Activated naive CD4-positive, alpha-beta T cell treated with anti-CD3 and anti-CD28 coated beads for 36 hours (primary cell): ENCODE measurements at regions of chr11 and their contacts with region 1.

Region 1: DNA sequence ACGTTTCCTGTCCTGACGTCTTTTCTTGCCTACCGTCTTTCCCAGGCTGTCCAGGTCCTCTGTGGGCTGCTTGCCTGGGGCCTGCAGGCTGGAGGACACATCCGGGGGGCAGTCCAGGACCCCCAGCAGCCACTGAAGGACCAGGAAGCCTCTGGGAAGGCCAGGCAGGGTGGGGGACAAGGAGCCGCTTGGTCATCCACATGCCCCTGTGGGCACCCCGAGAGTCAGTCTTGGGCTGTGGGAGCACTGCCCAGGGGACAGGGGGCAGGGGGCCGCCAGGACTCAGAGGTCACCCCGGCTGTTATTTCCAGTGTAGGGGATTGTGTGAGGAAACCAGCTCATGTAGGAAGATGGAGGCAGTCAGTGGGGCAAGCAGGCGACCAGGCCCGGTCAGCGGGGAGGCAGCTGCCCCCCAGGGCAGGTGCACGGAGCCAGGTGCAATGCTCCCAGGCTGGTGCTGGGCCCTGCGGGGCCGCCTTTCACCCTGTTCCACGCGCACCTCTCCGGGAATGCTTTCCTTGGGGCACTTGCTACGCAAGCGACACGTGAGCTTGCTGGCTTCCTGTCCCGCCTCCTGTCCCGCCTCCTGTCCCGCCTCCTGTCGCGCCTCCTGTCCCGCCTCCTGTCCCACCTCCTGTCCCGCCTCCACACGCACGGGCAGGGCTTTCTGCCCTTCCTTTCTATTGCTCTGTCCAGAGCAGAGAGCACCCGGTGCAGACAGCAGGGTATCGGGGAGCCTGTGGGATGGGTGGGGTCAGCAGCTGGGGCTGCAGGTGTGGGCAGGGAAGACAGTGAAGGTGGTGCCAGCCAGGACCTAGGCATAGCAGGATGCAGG is 39.5 kb downstream of the MUC5B start:
- DNase-seq: peak; percentile 94
- H3K4me3 Mint-ChIP-seq: peak overlapping the region; percentile 85
- H3K27ac Mint-ChIP-seq: peak overlapping the region; percentile 87
- H3K4me1 Mint-ChIP-seq: peaks cover 16% of the 10 kb centered on the region
- H3K27me3 Mint-ChIP-seq: no peaks in the 10 kb centered on the region

Region 2: DNA sequence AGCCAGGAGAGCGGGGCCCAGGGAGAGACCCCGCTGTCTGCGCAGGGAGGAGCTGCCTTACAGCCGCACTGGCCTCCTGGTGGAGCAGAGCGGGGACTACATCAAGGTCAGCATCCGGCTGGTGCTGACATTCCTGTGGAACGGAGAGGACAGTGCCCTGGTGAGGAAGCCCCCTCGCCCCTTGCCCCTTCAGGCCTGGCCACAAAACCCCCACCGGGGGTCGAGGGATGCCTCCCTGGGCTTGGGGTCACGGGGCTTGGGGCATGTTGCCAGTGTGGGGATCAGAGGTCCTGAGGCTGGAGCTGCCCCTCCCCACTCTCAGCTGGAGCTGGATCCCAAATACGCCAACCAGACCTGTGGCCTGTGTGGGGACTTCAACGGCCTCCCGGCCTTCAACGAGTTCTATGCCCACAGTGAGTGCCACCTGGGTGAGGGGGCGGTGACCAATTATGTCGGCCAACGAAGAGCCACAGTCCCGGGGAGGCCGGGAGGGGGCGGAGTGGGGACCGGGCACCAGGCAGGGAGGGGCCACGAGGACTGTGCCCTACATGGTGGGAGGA is 35.3 kb before region 1 on chr11:
- CTCF ChIA-PET with region 1: no interaction called
- intact Hi-C with region 1: no loop called
- DNase-seq: no peak
- H3K4me3 Mint-ChIP-seq: no peak overlapping the region
- H3K27ac Mint-ChIP-seq: no peak overlapping the region
- H3K4me1 Mint-ChIP-seq: no peaks in the 10 kb centered on the region
- H3K27me3 Mint-ChIP-seq: no peaks in the 10 kb centered on the region

Region 3: GRCh38 chr11:1309498-1310317 is 47.3 kb after region 1 on chr11 and contains the start of gene TOLLIP:
- CTCF ChIA-PET with region 1: no interaction called
- intact Hi-C with region 1: loop called (anchors 1 kb)
- DNase-seq: peak; percentile 97
- H3K4me3 Mint-ChIP-seq: peak within 1 kb of the TSS; percentile 89
- H3K27ac Mint-ChIP-seq: peak within 1 kb of the TSS; percentile 94
- H3K4me1 Mint-ChIP-seq: peaks cover 40% of the 10 kb centered on the region
- H3K27me3 Mint-ChIP-seq: no peaks in the 10 kb centered on the region
- total RNA-seq, gene TOLLIP: 19.9 to 21.7 TPM

Region 4: DNA sequence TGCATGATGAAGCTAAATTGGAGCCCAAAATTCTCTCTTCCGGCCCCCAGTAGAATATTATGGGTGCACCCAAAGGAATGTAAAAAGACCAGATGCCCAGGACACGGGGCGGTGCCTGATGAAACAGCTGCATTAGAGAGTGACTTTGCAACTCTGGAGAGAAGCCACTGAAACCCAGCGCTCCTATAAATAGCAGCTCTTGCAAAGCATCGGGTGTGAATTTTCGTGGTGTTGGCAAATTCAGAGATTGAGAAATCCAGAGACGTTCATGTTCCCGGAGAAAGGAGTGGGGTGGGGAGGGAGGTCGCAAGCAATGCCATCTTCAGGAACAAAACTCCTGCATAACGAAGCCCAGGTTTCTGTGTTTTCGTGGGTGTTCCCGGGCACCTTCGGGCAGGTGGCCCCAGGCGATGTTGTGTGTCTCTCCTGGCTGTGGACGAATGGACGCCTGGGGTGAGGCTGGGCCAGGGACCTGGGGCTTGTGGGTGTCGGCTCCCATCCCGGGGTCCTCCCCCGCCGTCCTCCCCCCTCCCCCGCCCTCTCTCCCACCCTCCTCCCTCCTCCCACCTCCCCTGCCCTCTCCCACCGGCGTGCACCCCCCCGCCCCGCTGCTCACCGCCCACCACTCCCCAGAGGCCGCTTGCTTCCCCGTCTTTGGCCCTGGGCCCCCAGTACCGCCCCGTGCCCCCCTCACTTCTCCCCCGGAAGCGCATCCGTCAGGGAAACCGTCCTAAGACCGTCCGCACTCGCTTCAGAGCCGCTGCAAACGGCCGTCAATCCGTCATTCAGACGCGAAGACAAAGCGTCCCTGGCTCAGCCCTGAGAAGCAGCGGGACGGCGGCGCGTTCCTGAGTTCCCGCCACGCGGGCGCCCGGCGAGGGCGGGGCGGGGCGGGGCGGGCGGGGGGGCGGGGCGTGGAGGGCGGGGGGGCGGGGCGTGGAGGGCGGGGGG is 73.7 kb after region 1 on chr11:
- CTCF ChIA-PET with region 1: no interaction called
- intact Hi-C with region 1: loop called (anchors 5 kb)
- DNase-seq: peak; percentile 70
- H3K4me3 Mint-ChIP-seq: peak overlapping the region; percentile 76
- H3K27ac Mint-ChIP-seq: peak overlapping the region; percentile 56
- H3K4me1 Mint-ChIP-seq: peaks cover 10% of the 10 kb centered on the region
- H3K27me3 Mint-ChIP-seq: peaks cover 3% of the 10 kb centered on the region

Region 5: DNA sequence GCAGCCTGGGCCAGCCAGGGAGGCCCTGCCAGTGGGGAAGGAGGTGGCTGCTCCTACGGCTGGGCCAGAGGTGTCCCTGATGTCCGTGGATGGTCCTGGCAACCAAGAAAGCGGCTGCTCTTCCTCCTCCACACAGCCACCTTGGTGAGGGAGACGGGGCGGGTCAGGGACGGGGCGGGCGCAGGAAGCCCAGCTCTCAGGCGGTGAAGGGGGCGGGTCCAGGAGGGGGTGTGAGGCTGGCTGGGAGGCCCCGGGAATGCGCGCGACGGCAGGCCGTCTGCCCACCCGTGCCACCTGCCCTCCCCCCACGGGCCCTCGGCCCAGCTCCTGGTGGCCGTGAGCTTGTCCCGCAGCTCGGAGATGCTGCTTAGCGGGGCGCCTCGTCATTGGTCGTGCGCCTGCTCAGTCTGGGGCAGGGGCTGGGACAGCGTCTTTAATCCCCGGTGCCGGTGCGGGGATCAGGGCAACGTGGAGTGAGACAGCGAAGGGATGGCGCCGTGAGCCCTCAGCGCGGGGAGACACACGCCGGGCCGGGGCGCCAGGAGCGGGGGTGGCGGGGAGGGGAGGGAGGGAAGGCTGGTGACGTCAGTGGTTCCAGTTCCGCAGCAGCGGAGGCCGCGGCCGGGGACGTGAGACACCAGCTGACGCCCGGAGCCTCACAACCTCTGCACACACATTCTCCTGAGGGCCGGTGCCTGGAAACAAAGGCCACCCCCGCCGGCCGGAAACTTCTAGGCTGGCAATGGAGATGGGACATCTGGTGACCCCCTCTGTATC is 120.6 kb after region 1 on chr11:
- CTCF ChIA-PET with region 1: no interaction called
- intact Hi-C with region 1: loop called (anchors 2 kb)
- DNase-seq: peak; percentile 82
- H3K4me3 Mint-ChIP-seq: peak overlapping the region; percentile 74
- H3K27ac Mint-ChIP-seq: peak overlapping the region; percentile 74
- H3K4me1 Mint-ChIP-seq: peaks cover 12% of the 10 kb centered on the region
- H3K27me3 Mint-ChIP-seq: no peaks in the 10 kb centered on the region

Region 6: GRCh38 chr11:1389103-1389931 is 126.9 kb after region 1 on chr11:
- CTCF ChIA-PET with region 1: no interaction called
- intact Hi-C with region 1: loop called (anchors 2 kb)
- DNase-seq: peak; percentile 97
- H3K4me3 Mint-ChIP-seq: peak overlapping the region; percentile 56
- H3K27ac Mint-ChIP-seq: no peak overlapping the region
- H3K4me1 Mint-ChIP-seq: peaks cover 3% of the 10 kb centered on the region
- H3K27me3 Mint-ChIP-seq: peaks cover 21% of the 10 kb centered on the region

Region 7: GRCh38 chr11:1453611-1454034 is 191.2 kb after region 1 on chr11:
- CTCF ChIA-PET with region 1: no interaction called
- intact Hi-C with region 1: loop called (anchors 1 kb)
- DNase-seq: peak; percentile 82
- H3K4me3 Mint-ChIP-seq: no peak overlapping the region
- H3K27ac Mint-ChIP-seq: no peak overlapping the region
- H3K4me1 Mint-ChIP-seq: no peaks in the 10 kb centered on the region
- H3K27me3 Mint-ChIP-seq: no peaks in the 10 kb centered on the region

Region 8: GRCh38 chr11:1515082-1516060 is 253.0 kb after region 1 on chr11:
- CTCF ChIA-PET with region 1: interaction called, 4 read pairs
- intact Hi-C with region 1: loop called (anchors 1 kb)
- DNase-seq: peak; percentile 82
- H3K4me3 Mint-ChIP-seq: no peak overlapping the region
- H3K27ac Mint-ChIP-seq: no peak overlapping the region
- H3K4me1 Mint-ChIP-seq: peaks cover 61% of the 10 kb centered on the region
- H3K27me3 Mint-ChIP-seq: no peaks in the 10 kb centered on the region